ENCODE measurements at regions of chr5 and their contacts with region 1.

Region 1: DNA sequence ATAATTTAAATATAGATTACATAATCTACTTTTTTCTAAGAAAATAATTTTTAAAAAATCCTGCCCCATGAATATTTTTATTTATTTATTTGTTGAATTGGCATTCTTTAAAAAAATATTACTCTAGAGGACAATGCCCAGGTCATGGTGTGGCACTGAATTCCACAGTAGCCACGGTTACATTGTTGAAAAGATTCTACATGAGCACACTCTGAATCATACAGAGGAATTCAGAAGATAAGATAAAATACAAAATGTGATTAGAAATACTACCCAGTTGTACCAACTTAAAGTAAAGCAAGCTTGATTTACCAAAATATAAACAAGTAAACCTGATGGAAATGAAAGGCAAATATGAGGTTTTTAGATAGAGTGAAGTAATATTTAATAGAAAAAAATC is 183.7 kb downstream of the HCN1 start:
- DNase-seq: no peak
- ATAC-seq: no peak
- H3K4me3 ChIP-seq: no peak overlapping the region
- H3K27ac ChIP-seq: no peak overlapping the region
- H3K4me1 ChIP-seq: no peaks in the 10 kb centered on the region
- H3K27me3 ChIP-seq: no peaks in the 10 kb centered on the region
- CTCF ChIP-seq: no peak

Region 2: GRCh38 chr5:45038366-45038987 is 474.0 kb before region 1 on chr5:
- intact Hi-C with region 1: loop called in 1 of 3 experiments (anchors 10 kb)
- DNase-seq: peak in 1 of 6 donors; percentile 11
- ATAC-seq: peak; percentile 68 to 88 (median 78)
- H3K4me3 ChIP-seq: no peak overlapping the region
- H3K27ac ChIP-seq: no peak overlapping the region
- H3K4me1 ChIP-seq: no peaks in the 10 kb centered on the region
- H3K27me3 ChIP-seq: no peaks in the 10 kb centered on the region
- CTCF ChIP-seq: peak; percentile 23 to 56 (median 46)